IMR-90 (cell line): ENCODE measurements at regions of chr4 and their contacts with region 1.

Region 1: DNA sequence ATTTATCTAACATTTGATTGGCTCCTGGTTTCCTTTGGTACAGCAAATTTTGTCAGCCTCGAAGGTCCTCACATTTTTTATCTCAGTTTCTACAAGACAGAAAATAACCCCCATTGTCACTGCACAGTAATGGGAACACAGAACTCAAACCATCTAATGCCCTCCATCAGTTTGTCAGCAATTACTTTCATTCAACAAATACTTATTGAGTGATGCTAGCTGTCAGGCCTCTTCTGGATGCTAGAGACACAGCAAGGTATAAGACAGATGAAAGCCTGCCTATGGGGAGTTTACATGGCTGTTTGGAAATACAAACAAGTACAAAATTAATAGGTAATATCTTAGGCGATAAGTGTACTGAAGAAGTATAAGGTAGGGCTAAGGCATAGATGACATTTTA is 5.0 kb upstream of the HTN3 start:
- DNase-seq: no peak
- ATAC-seq: no peak
- H3K4me3 ChIP-seq: no peak overlapping the region
- H3K27ac ChIP-seq: no peak overlapping the region
- H3K4me1 ChIP-seq: no peaks in the 10 kb centered on the region
- H3K27me3 ChIP-seq: no peaks in the 10 kb centered on the region
- CTCF ChIP-seq: no peak
- POLR2A ChIP-seq: no peak
- RAD21 ChIP-seq: no peak

Region 2: DNA sequence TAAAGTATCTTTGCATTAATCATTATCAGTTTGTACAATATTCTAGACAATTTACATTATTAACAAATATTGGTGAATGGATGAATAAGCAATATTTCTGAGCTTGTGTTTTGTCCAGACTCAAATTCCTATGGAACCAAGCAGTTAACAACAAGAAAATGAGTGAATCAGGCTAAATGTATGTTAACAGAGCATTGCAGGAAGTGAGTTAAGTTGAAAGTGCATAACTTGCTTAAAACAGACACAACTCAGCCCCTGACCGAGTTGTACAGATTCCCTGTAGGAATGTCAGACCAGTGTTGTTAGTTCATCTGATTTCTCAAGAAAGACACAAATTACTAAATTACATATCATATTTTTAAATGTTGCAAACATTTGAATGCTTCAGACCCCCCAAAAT is 116.1 kb before region 1 on chr4:
- CTCF ChIA-PET with region 1: no interaction called
- POLR2A ChIA-PET with region 1: no interaction called
- dilution Hi-C with region 1: no loop called
- in situ Hi-C with region 1: no loop called
- intact Hi-C with region 1: loop called (anchors 1 kb)
- DNase-seq: peak; percentile 33
- ATAC-seq: peak; percentile 61
- H3K4me3 ChIP-seq: no peak overlapping the region
- H3K27ac ChIP-seq: no peak overlapping the region
- H3K4me1 ChIP-seq: no peaks in the 10 kb centered on the region
- H3K27me3 ChIP-seq: no peaks in the 10 kb centered on the region
- CTCF ChIP-seq: no peak
- POLR2A ChIP-seq: no peak
- RAD21 ChIP-seq: no peak